ENCODE measurements at regions of chr11 and their contacts with region 1.

Region 1: GRCh38 chr11:121464352-121464946 is 11.7 kb upstream of the SORL1-AS1 start:
- DNase-seq: peak; percentile 94
- H3K4me3 Mint-ChIP-seq: peak overlapping the region; percentile 65
- H3K27ac Mint-ChIP-seq: peak overlapping the region; percentile 96
- H3K4me1 Mint-ChIP-seq: peaks cover 96% of the 10 kb centered on the region
- H3K27me3 Mint-ChIP-seq: no peaks in the 10 kb centered on the region

Region 2: DNA sequence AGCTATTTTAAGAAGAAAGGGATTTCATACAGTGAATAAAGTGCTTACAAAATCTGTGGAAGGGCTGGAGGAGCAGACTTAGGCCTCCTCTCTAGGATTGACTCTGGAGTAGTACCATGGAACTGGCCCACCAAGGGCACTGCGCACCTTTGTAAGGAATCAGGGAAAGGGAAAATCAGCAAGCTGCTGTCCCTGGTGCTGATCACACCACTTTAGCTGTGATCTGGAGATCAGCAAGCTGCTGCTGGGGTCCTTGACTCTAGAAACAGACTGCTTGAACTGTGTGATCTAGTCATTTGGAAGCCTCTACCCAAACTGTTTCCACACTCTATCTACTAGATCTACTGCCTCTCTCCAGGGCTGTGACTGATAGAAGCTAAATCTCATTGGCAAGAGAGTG is 381.8 kb before region 1 on chr11:
- CTCF ChIA-PET with region 1: no interaction called
- intact Hi-C with region 1: no loop called
- DNase-seq: peak; percentile 29
- H3K4me3 Mint-ChIP-seq: no peak overlapping the region
- H3K27ac Mint-ChIP-seq: no peak overlapping the region
- H3K4me1 Mint-ChIP-seq: peaks cover 14% of the 10 kb centered on the region
- H3K27me3 Mint-ChIP-seq: no peaks in the 10 kb centered on the region

Region 3: GRCh38 chr11:121292495-121293287 is 171.8 kb before region 1 on chr11 and contains the start of gene SC5D:
- CTCF ChIA-PET with region 1: no interaction called
- intact Hi-C with region 1: loop called (anchors 1 kb)
- DNase-seq: peak; percentile 97
- H3K4me3 Mint-ChIP-seq: peak within 1 kb of the TSS; percentile 90
- H3K27ac Mint-ChIP-seq: peak within 1 kb of the TSS; percentile 95
- H3K4me1 Mint-ChIP-seq: peaks cover 32% of the 10 kb centered on the region
- H3K27me3 Mint-ChIP-seq: no peaks in the 10 kb centered on the region
- total RNA-seq, gene SC5D: 29.6 to 31.7 TPM

Region 4: GRCh38 chr11:121426476-121427399 is 37.7 kb before region 1 on chr11:
- CTCF ChIA-PET with region 1: interaction called, 3 read pairs
- intact Hi-C with region 1: loop called (anchors 1 kb)
- DNase-seq: peak; percentile 69
- H3K4me3 Mint-ChIP-seq: peak overlapping the region; percentile 63
- H3K27ac Mint-ChIP-seq: no peak overlapping the region
- H3K4me1 Mint-ChIP-seq: peaks cover 37% of the 10 kb centered on the region
- H3K27me3 Mint-ChIP-seq: no peaks in the 10 kb centered on the region

Region 5: DNA sequence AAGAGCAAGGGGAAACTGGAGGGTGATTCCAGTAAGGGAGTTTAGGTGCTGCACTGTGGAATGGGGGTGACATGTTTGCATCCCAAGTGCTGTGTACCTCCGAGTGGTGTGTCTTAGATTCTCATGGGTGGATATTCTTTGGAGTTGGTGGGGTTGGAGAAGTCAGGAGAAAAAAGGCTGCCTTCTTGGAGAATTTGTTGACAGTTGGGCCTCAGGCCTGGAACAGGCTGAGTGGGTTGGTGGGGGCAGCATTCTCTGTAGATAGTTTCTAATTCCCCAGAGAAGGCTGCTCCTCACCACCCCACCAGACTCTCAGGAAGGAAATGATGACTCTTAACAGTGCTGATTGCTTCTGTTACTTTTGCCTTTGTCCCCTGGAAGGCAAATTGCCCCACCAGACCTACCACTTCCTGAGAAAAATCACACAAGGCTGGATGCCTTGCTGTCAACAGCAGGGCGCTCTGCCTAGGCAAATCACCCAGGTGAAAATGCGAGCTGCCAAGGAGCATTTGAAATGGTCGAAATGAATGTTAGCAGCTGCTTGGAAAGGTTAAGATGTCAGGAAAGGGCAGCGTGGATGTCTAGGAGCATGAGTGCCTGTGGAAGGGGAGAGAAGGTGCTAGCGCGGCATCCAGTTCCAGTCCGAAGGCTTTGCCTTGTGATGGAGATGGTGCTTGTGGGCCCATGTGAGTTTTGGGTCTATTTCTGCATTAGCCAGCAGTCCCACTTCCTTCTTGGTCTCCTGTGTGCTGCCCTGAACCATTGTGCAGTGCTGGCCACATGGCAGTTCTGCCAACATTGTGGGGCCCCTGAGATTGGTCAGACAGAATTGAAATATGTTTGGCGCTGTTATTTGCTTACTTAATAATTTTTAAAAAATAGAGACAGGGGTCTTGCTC is 18.0 kb after region 1 on chr11:
- CTCF ChIA-PET with region 1: interaction called, 7 read pairs
- intact Hi-C with region 1: loop called (anchors 1 kb)
- DNase-seq: peak; percentile 80
- H3K4me3 Mint-ChIP-seq: peak overlapping the region; percentile 88
- H3K27ac Mint-ChIP-seq: peak overlapping the region; percentile 98
- H3K4me1 Mint-ChIP-seq: peaks cover 39% of the 10 kb centered on the region
- H3K27me3 Mint-ChIP-seq: no peaks in the 10 kb centered on the region

Region 6: DNA sequence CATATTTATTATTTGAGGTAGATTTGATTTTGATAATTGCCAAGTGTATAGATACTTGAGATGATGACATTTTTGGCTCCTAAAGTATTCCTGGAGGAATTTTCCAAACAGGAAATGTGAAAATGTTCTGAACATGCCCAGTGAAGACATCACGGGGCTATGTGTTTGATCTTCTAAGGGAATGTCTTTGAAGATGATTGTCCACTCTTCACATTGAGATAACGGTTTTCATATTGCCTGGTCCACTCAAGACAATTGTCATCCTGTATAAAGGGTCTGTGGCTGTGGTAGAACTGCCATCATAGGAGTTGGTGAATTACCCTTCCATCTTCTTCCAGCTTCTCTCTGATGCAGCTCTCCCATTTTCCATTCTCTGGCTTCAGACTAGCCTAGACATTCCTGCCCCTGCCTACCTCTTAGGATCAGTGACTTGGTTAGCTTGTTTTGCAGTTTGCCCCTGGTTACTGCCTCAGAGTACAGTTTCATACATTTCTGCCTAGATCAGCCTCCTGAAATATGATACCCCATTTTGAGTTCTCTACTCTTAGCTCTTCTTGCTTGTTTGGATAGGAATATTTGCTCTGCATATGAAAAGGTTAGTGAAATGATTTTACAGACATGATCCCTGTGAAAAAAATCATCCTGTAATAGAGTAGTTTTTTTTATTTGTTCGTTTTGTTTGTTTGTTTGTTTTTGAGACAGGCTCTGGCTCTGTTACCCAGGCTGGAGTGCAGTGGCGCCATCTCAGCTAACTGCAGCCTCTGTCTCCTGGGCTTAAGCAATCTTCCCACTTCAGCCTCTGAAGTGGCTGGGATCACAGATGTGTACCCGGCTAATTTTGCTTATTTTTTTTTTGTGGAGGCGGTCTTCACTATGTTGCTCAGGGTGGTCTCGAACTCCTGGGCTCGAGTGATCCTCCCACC is 99.7 kb after region 1 on chr11:
- CTCF ChIA-PET with region 1: no interaction called
- intact Hi-C with region 1: loop called (anchors 1 kb)
- DNase-seq: no peak
- H3K4me3 Mint-ChIP-seq: no peak overlapping the region
- H3K27ac Mint-ChIP-seq: no peak overlapping the region
- H3K4me1 Mint-ChIP-seq: peaks cover 41% of the 10 kb centered on the region
- H3K27me3 Mint-ChIP-seq: no peaks in the 10 kb centered on the region

Region 7: DNA sequence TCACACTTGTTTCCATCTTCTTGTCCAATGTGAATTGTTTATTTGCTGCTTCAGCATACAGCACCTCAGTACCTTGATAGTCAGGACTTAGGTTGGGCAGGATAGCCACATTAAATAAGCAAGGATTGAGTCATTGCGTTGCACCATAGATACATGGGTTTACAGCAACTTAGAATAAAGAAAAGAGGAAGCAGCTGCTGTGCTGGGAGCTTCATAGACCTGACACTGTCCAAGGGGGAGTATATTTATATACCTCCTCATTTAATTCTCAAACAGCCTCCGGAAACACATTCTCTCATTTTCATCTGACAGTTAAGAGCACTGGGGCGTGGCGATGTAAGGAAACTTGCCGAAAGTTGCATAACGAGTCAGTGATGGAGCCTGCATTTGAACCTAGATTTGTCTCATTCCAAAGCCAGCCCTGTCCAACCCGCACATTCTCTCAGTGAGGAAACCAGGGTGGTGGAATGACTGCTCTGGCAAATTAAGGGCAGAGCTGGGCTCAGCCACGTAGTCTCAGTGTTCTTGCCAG is 1233.3 kb after region 1 on chr11:
- CTCF ChIA-PET with region 1: no interaction called
- intact Hi-C with region 1: loop called (anchors 5 kb)
- DNase-seq: peak; percentile 77
- H3K4me3 Mint-ChIP-seq: peak overlapping the region; percentile 50
- H3K27ac Mint-ChIP-seq: peak overlapping the region; percentile 78
- H3K4me1 Mint-ChIP-seq: peaks cover 77% of the 10 kb centered on the region
- H3K27me3 Mint-ChIP-seq: no peaks in the 10 kb centered on the region

Region 8: DNA sequence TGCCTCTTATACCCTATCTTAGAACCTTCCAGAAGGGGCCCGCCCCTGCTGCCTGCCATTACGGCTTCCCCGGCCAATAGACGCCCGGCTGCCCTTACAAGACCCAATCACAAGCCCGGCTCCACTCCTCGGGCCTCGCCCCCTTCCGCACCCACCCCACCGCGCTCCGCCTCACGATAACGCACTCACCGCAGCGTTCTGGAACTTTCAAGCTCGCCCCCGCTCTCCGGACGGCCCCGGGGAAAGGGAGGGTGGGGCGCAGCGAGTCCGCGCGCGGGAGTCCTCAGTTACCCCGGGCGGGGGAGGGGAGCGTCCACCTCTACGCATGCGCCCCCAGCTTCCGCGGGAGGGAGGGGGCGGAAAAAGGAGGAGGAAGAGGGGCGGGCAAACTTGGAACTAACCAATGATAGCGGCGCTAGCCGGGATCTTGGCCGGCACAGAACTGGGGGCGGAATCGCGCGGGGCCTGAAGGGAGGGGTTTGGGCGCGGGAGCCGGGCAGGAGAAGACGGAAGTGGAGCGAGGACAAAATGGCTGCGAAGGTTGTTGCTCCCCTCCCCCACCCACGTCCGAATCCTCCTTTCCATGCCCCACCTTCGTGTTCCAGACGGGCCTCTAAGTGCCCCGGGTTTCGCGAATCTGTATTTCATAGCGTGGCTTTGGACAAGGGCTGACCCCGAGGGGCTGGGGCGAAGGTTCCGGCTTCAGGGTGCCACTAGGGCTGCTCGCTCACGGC is 1597.9 kb after region 1 on chr11:
- CTCF ChIA-PET with region 1: no interaction called
- intact Hi-C with region 1: loop called (anchors 5 kb)
- DNase-seq: peak; percentile 100
- H3K4me3 Mint-ChIP-seq: peak overlapping the region; percentile 97
- H3K27ac Mint-ChIP-seq: peak overlapping the region; percentile 99
- H3K4me1 Mint-ChIP-seq: peaks cover 40% of the 10 kb centered on the region
- H3K27me3 Mint-ChIP-seq: no peaks in the 10 kb centered on the region